Activated T-helper 1 cell treated with anti-CD3 and anti-CD28 coated beads, Interleukin-12 subunit alpha, Interleukin-12 subunit beta, Interleukin-2, Interleukin-4 antibody, amounts not matched to agents 30 ng/mL and 10 ng/mL and 1 ng/mL, durations not matched to agents 14 hours and 24 hours and 36 hours (primary cell): ENCODE measurements at regions of chr16 and their contacts with region 1.

Region 1: DNA sequence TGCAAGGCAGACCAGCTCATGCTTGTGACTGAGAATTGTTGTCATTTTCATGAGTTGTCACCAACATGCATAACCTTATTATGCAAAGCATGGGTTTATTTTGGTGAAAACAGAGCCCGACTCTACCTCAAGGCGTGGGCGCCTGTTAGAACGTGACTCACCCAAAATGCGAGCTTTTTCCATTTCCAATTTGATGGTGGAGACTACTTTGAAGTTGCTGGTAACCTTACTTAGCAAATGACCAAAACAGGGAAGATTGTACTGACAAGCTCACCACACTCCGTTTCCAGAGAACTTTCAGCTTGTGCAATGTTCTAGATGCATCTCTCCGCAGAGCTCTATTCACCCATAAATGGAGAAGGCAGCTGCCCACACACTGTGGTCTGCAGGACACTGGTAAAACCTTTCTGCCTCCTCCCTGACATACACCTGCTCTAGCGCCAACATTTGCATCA is 284.5 kb downstream of the MAF start:
- DNase-seq: peak; percentile 54
- H3K4me3 Mint-ChIP-seq: peak overlapping the region; percentile 64
- H3K27ac Mint-ChIP-seq: peak overlapping the region; percentile 90
- H3K4me1 Mint-ChIP-seq: peaks cover 29% of the 10 kb centered on the region
- H3K27me3 Mint-ChIP-seq: peaks cover 10% of the 10 kb centered on the region

Region 2: DNA sequence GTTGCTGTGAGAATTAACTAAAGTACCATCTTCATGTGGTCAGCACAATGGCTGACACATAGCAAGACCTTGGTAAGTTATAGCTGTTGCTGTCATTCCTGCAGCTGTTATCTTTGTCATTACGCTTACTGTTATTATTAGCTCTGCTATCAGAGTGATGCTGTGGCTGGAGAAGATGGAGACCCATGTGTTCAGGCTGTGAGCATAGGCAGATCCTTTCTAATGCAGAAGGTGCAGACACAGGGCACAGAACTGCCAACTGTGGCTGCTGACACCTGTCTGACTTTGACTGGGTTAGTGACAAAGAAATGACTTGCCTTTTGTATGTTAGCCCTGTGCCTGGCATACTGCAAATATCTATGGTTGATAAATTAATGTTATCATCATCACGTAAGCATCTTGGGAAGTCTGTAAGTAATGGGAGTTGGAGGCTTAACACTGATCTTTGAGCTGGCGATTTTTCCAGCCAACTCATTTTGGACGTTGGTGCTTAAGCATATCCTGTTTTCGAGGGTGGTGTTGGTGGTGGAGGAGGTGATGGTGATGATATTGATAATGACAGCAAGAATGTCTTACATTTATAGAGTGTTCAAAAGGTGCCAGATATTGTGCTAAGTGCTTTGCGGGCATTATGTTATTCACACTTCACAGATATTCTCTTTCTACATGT is 521.3 kb before region 1 on chr16:
- intact Hi-C with region 1: loop called (anchors 5 kb)
- DNase-seq: no peak
- H3K4me3 Mint-ChIP-seq: no peak overlapping the region
- H3K27ac Mint-ChIP-seq: peak overlapping the region; percentile 77
- H3K4me1 Mint-ChIP-seq: peaks cover 35% of the 10 kb centered on the region
- H3K27me3 Mint-ChIP-seq: no peaks in the 10 kb centered on the region

Region 3: GRCh38 chr16:79089735-79090284 is 226.2 kb before region 1 on chr16:
- intact Hi-C with region 1: loop called (anchors 1 kb)
- DNase-seq: peak; percentile 66
- H3K4me3 Mint-ChIP-seq: peak overlapping the region; percentile 62
- H3K27ac Mint-ChIP-seq: peak overlapping the region; percentile 95
- H3K4me1 Mint-ChIP-seq: peaks cover 53% of the 10 kb centered on the region
- H3K27me3 Mint-ChIP-seq: no peaks in the 10 kb centered on the region

Region 4: DNA sequence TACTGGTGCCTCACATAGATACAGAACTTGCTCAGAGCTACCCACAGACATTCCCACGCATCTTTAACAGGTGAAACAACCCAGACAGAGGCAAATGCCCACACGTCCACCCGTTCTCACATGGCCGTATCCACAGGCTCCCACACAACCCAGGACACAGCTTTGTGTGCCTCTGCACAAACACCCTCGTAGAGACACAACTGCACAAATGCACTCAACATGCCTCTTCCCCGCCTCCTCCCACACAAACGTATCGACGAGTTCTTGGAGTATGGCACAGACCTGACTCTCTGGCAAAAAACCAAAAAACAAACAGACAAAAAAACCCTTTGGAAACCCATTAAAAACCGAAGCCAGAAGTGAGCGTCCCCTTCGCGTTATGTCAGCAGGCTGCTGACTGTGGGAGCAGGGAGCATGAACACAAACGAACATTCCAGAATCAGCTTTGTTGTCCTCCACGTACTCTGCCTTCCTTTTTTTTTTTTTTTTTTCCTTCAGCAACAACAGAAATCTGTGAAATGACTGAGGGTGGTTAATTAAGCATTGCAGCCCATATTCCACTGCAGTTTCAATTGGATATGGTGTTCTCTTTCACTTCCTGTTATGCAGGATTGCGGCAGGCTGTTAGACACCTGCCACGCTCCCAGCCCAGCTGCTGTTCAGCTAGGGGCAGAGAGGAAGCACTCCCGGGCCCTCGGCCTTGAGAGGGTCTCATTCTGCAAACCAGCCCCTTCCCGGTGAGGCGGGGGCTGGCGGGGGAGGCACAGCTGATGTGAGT is 29.2 kb before region 1 on chr16:
- intact Hi-C with region 1: loop called (anchors 1 kb)
- DNase-seq: no peak
- H3K4me3 Mint-ChIP-seq: peak overlapping the region; percentile 51
- H3K27ac Mint-ChIP-seq: peak overlapping the region; percentile 77
- H3K4me1 Mint-ChIP-seq: peaks cover 56% of the 10 kb centered on the region
- H3K27me3 Mint-ChIP-seq: peaks cover 8% of the 10 kb centered on the region